GM10248 (cell line): ENCODE measurements at regions of chr6 and their contacts with region 1.

Region 1: GRCh38 chr6:136792410-136793262 is at the start of gene MAP3K5:
- DNase-seq: peak; percentile 80
- CTCF ChIP-seq: peak; percentile 93

Region 2: GRCh38 chr6:136600818-136601217 is 191.8 kb before region 1 on chr6:
- CTCF ChIA-PET with region 1: interaction called, 10 read pairs
- POLR2A ChIA-PET with region 1: no interaction called
- DNase-seq: no peak
- CTCF ChIP-seq: no peak

Region 3: DNA sequence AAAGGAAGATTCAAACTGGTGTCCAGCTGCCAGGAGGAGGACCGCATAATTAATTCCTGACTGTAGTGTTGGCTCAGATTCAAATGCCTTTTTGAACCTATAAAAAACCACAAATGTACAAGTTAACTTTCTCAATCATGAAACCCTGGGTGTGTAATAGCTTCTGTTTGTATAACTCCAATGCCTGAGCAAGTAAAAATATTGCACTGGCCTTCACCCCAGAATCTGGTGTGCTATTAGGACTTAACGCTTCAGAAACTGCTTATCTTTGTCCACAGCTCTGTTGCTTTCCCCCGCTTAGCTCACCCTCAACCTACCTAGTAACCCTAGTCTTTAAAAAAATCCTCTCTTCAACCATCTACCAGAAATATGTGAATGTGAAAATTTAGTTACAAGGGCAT is 123.3 kb before region 1 on chr6:
- CTCF ChIA-PET with region 1: interaction called, 14 read pairs
- POLR2A ChIA-PET with region 1: no interaction called
- DNase-seq: no peak
- CTCF ChIP-seq: no peak

Region 4: DNA sequence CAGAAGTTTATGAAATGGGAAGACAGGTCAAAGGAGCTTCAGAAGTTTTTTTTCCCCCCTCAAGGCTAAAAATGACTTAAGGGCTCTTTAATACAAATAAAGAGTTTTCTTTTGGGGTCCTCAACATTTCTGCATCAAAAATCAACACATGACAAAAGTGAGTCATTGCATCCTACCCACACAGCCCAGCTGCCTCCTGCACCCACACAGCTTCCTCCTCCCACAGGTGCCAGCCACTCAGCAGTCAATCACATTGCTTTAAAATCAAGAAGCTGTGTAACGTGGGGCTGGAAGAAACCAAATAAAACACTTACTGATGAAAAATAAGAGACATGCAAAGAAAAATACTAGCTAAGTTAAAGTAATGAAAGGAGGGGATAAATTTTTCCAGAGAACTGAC is 68.9 kb before region 1 on chr6:
- CTCF ChIA-PET with region 1: interaction called, 54 read pairs
- POLR2A ChIA-PET with region 1: interaction called, 9 read pairs
- DNase-seq: no peak
- CTCF ChIP-seq: no peak

Region 5: GRCh38 chr6:136761227-136761922 is 31.3 kb before region 1 on chr6:
- CTCF ChIA-PET with region 1: interaction called, 50 read pairs
- POLR2A ChIA-PET with region 1: interaction called, 12 read pairs
- DNase-seq: no peak
- CTCF ChIP-seq: no peak

Region 6: DNA sequence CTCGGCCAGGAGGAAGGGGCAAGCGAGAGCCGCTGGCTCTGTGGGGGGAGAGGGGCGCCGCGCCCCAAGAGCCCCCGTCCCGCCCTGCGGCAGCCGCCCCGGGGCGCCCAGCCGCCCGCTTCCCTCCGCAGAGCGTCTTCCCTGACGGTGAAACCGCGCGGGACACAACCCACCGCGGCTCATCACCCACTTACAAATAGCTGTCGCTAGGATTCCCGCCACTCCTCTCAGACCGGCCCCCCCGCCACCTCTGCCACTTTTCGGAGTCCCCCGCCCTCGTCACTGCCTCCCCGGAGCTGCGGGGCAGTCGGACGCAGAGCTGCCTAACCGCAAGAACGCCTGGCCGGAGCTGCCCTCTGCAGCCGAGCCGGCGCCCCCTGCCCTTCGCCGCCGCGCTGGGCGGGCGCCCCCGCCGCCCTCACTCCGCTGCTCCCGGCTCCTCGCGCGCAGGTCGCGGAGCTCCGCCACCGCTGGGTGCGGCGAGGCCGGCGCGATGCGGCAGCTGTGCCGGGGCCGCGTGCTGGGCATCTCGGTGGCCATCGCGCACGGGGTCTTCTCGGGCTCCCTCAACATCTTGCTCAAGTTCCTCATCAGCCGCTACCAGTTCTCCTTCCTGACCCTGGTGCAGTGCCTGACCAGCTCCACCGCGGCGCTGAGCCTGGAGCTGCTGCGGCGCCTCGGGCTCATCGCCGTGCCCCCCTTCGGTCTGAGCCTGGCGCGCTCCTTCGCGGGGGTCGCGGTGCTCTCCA is 129.5 kb after region 1 on chr6 and contains the start of gene SLC35D3:
- CTCF ChIA-PET with region 1: interaction called, 10 read pairs
- POLR2A ChIA-PET with region 1: no interaction called
- DNase-seq: peak; percentile 61
- CTCF ChIP-seq: no peak